ENCODE measurements at regions of chr2 and their contacts with region 1.

Region 1: GRCh38 chr2:143259368-143259958 is 130.2 kb downstream of the ARHGAP15 start:
- DNase-seq: peak; percentile 37
- H3K4me3 ChIP-seq: peak overlapping the region in 1 of 2 experiments; percentile 38; a peak in 1 of 4 replicates
- H3K27ac ChIP-seq: no peak overlapping the region
- H3K4me1 ChIP-seq: no peaks in the 10 kb centered on the region; a peak in 2 of 4 replicates
- H3K27me3 ChIP-seq: no peaks in the 10 kb centered on the region
- CTCF ChIP-seq: peak; percentile 85
- EP300 ChIP-seq: no peak
- RAD21 ChIP-seq: peak; percentile 89

Region 2: DNA sequence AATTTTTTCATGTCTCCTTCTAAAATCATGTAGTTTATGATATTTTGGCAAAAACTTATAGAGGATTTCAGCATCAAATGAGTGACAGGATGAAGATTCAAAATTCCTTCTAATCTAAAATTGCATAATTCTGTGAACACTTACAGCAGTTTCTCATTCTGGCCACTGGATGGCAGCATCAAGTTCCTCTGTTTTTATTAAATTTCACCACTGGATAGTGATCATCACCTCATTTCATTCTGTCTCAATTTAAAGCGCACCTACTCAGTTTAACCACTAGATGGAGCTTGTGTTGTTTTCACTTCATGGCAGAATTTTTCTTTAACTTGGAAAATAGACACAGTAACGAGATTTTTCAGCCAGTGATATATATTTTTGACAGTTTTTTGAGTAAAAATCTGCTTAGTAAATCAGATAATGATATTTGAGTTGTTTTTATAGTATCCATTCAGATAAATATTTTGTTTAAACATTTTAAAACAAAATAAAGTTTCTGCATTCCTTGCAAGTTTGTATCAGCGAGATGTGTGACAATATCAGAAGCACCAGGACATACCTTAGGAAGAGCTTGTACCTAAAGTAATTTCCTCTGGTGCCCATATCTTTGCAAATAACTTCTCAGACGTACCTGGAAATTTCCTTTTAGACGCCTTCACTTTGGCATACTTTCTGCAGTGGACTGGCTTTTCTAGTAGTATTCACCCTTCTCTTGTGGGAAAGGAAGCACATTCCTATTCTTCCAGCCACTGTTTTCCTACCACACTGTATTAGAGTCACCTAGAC is 225.0 kb before region 1 on chr2:
- CTCF ChIA-PET with region 1: interaction called, 23 read pairs
- POLR2A ChIA-PET with region 1: no interaction called
- DNase-seq: peak; percentile 57
- H3K4me3 ChIP-seq: peak overlapping the region in 1 of 2 experiments; percentile 42; a peak in 1 of 4 replicates
- H3K27ac ChIP-seq: no peak overlapping the region
- H3K4me1 ChIP-seq: no peaks in the 10 kb centered on the region
- H3K27me3 ChIP-seq: no peaks in the 10 kb centered on the region
- CTCF ChIP-seq: peak; percentile 100
- EP300 ChIP-seq: no peak
- RAD21 ChIP-seq: peak; percentile 85

Region 3: GRCh38 chr2:143078104-143078503 is 181.4 kb before region 1 on chr2:
- CTCF ChIA-PET with region 1: no interaction called
- POLR2A ChIA-PET with region 1: no interaction called
- DNase-seq: no peak
- H3K4me3 ChIP-seq: no peak overlapping the region
- H3K27ac ChIP-seq: no peak overlapping the region
- H3K4me1 ChIP-seq: no peaks in the 10 kb centered on the region
- H3K27me3 ChIP-seq: no peaks in the 10 kb centered on the region
- CTCF ChIP-seq: no peak
- EP300 ChIP-seq: no peak
- RAD21 ChIP-seq: no peak

Region 4: GRCh38 chr2:143162123-143162837 is 97.2 kb before region 1 on chr2:
- CTCF ChIA-PET with region 1: interaction called, 92 read pairs
- POLR2A ChIA-PET with region 1: no interaction called
- DNase-seq: peak; percentile 21
- H3K4me3 ChIP-seq: no peak overlapping the region
- H3K27ac ChIP-seq: no peak overlapping the region
- H3K4me1 ChIP-seq: no peaks in the 10 kb centered on the region; a peak in 2 of 4 replicates
- H3K27me3 ChIP-seq: no peaks in the 10 kb centered on the region
- CTCF ChIP-seq: peak; percentile 58
- EP300 ChIP-seq: no peak
- RAD21 ChIP-seq: peak; percentile 93

Region 5: DNA sequence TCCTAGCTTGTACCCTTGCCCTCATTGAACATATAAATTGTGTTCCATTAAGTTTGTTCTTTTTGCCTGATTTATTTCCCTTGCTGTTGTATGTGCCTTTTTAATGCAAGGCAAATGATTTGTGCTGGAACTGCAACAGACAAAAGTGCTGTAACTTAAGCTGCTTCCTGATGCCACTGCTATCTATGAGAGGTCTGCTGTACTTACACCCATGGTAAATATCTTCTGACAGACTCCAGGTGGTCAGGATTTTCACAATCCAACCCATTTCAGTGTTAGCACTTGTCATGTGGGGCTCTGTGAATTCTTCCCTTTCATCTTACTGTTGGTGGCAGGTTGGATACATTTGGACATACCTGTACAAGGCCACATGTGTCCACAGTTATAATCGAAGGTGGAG is 66.7 kb before region 1 on chr2:
- CTCF ChIA-PET with region 1: interaction called, 10 read pairs
- POLR2A ChIA-PET with region 1: no interaction called
- DNase-seq: no peak
- H3K4me3 ChIP-seq: no peak overlapping the region
- H3K27ac ChIP-seq: no peak overlapping the region
- H3K4me1 ChIP-seq: no peaks in the 10 kb centered on the region; a peak in 1 of 4 replicates
- H3K27me3 ChIP-seq: no peaks in the 10 kb centered on the region
- CTCF ChIP-seq: no peak
- EP300 ChIP-seq: no peak
- RAD21 ChIP-seq: no peak

Region 6: GRCh38 chr2:143289025-143289424 is 29.6 kb after region 1 on chr2:
- CTCF ChIA-PET with region 1: interaction called, 10 read pairs
- POLR2A ChIA-PET with region 1: no interaction called
- DNase-seq: no peak
- H3K4me3 ChIP-seq: no peak overlapping the region
- H3K27ac ChIP-seq: no peak overlapping the region
- H3K4me1 ChIP-seq: no peaks in the 10 kb centered on the region; a peak in 1 of 4 replicates
- H3K27me3 ChIP-seq: no peaks in the 10 kb centered on the region
- CTCF ChIP-seq: no peak
- EP300 ChIP-seq: no peak
- RAD21 ChIP-seq: no peak